AG04450 (cell line): ENCODE measurements at regions of chr1 and their contacts with region 1.

Region 1: GRCh38 chr1:86061551-86061990 is 95.0 kb downstream of the COL24A1 start:
- DNase-seq: no peak
- H3K4me3 ChIP-seq: no peak overlapping the region
- H3K27ac ChIP-seq: no peak overlapping the region
- H3K27me3 ChIP-seq: no peaks in the 10 kb centered on the region
- CTCF ChIP-seq: no peak

Region 2: GRCh38 chr1:86082183-86082582 is 20.6 kb after region 1 on chr1:
- CTCF ChIA-PET with region 1: no interaction called
- POLR2A ChIA-PET with region 1: no interaction called
- DNase-seq: no peak
- H3K4me3 ChIP-seq: no peak overlapping the region
- H3K27ac ChIP-seq: no peak overlapping the region
- H3K27me3 ChIP-seq: no peaks in the 10 kb centered on the region
- CTCF ChIP-seq: peak; percentile 26; the same call in 1 of the 2 replicates

Region 3: GRCh38 chr1:86169625-86170024 is 108.1 kb after region 1 on chr1:
- CTCF ChIA-PET with region 1: interaction called, 10 read pairs
- POLR2A ChIA-PET with region 1: no interaction called
- DNase-seq: no peak
- H3K4me3 ChIP-seq: no peak overlapping the region
- H3K27ac ChIP-seq: no peak overlapping the region
- H3K27me3 ChIP-seq: no peaks in the 10 kb centered on the region
- CTCF ChIP-seq: peak; percentile 52